ENCODE measurements at regions of chr14 and their contacts with region 1.

Region 1: GRCh38 chr14:105636935-105637334 is 110.6 kb downstream of the TMEM121 start:
- DNase-seq: no peak
- H3K4me3 ChIP-seq: no peak overlapping the region
- H3K27ac ChIP-seq: no peak overlapping the region
- H3K4me1 ChIP-seq: no peaks in the 10 kb centered on the region
- H3K27me3 ChIP-seq: no peaks in the 10 kb centered on the region
- CTCF ChIP-seq: no peak

Region 2: GRCh38 chr14:105732748-105733622 is 96.0 kb after region 1 on chr14:
- CTCF ChIA-PET with region 1: no interaction called
- dilution Hi-C with region 1: no loop called
- in situ Hi-C with region 1: loop called in 1 of 2 experiments (anchors 5 kb)
- intact Hi-C with region 1: no loop called
- DNase-seq: no peak
- H3K4me3 ChIP-seq: no peak overlapping the region
- H3K27ac ChIP-seq: no peak overlapping the region
- H3K4me1 ChIP-seq: no peaks in the 10 kb centered on the region
- H3K27me3 ChIP-seq: no peaks in the 10 kb centered on the region
- CTCF ChIP-seq: no peak

Measured in mammary epithelial cell (primary cell).